Psoas muscle (tissue), 8 donors: ENCODE measurements at regions of chr12 and their contacts with region 1.

Region 1: DNA sequence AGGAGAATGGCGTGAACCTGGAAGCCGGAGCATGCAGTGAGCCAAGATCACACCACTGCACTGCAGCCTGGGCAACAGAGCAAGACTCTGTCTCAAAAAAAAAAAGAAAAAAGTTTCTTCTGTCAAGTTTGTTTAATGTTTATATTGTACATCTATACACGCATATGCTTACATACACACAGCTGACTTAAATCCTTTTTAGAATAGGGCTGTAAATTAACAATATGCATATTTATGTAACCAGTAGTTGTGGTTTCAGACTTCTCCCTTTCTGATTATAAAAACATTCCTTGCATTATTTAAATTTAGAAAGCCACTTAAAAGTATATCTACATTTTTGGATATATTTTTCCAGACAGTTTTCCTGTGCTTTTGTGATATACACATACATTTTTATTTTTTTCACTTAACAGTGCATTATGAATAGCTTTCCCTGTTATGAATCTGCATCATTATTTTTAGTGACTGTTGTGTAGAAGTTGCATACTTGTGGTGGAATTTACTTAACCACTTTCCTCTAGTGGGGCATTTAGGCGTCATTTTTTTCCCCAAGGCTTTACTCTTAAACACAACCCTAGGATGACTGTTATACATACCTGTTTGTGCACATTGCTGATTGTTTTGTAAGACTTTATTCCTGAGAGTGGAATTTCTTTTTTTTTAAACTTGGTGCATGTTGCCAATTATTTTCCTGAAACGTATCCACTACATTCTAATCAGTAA is 29.4 kb downstream of the POLR3B start:
- DNase-seq: no peak
- ATAC-seq: no peak
- H3K4me3 ChIP-seq: no peak overlapping the region
- H3K27ac ChIP-seq: no peak overlapping the region
- H3K4me1 ChIP-seq: no peaks in the 10 kb centered on the region
- H3K27me3 ChIP-seq: no peaks in the 10 kb centered on the region
- CTCF ChIP-seq: no peak

Region 2: DNA sequence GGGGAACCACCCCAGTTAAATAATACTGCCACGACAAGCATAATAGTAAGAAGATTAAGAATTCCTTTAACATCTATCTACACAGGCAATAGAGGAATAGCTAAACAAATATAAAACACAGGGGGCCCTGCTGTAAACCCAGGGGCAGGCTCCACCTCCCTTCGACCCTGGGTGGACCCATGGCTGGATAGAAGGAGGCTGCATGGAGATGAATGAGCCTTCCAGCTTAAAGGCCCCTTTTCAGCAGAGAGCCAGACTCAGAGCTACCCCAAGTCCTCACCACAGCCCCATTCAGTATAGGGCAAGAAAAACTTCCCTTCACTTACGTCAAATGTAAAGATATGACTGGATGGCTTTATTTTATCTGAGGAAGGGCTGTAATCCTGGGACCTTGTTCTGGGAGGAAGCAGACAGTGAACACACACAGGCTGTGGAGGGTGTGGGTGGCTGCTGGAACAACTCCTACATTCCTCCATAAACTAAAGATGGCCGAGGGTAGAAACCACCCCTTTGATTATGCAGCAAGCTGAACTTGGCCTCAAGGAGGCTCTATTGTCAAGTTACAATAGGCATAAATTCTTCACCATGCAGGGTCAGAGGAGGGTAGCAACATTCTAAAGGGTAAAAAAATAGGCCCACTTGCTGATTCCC is 278.7 kb before region 1 on chr12:
- intact Hi-C with region 1: no loop called
- DNase-seq: no peak
- ATAC-seq: no peak
- H3K4me3 ChIP-seq: no peak overlapping the region
- H3K27ac ChIP-seq: peak overlapping the region; percentile 12
- H3K4me1 ChIP-seq: peaks cover 82% of the 10 kb centered on the region
- H3K27me3 ChIP-seq: no peaks in the 10 kb centered on the region
- CTCF ChIP-seq: no peak

Region 3: DNA sequence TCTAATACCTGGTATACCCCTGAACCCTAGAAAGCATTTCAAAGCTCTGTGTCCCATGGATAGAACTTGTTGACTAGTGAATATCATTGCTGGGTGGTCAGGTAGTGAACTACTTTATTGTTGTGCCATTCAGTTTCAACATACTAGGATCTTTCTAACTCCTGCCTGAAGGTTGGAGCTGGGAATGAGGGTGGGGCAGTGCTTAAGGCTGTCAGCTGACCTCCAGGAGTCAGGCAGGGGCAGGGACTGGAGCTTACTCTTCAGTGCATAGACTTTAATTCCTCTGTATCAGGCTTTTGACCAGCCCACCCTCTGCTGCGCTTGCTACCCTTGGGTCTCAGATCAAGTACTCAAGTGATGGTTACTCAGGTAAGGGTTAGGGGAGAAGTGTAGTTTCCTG is 93.3 kb after region 1 on chr12:
- intact Hi-C with region 1: no loop called
- DNase-seq: no peak
- ATAC-seq: no peak
- H3K4me3 ChIP-seq: no peak overlapping the region
- H3K27ac ChIP-seq: no peak overlapping the region
- H3K4me1 ChIP-seq: no peaks in the 10 kb centered on the region
- H3K27me3 ChIP-seq: no peaks in the 10 kb centered on the region
- CTCF ChIP-seq: no peak

Region 4: GRCh38 chr12:106841510-106842302 is 454.7 kb after region 1 on chr12:
- intact Hi-C with region 1: loop called (anchors 5 kb)
- DNase-seq: no peak
- ATAC-seq: peak in 3 of 4 donors; percentile 65 to 94 (median 78)
- H3K4me3 ChIP-seq: no peak overlapping the region
- H3K27ac ChIP-seq: peak overlapping the region; percentile 3
- H3K4me1 ChIP-seq: peaks cover 32% of the 10 kb centered on the region
- H3K27me3 ChIP-seq: no peaks in the 10 kb centered on the region
- CTCF ChIP-seq: peak; percentile 53

Region 5: DNA sequence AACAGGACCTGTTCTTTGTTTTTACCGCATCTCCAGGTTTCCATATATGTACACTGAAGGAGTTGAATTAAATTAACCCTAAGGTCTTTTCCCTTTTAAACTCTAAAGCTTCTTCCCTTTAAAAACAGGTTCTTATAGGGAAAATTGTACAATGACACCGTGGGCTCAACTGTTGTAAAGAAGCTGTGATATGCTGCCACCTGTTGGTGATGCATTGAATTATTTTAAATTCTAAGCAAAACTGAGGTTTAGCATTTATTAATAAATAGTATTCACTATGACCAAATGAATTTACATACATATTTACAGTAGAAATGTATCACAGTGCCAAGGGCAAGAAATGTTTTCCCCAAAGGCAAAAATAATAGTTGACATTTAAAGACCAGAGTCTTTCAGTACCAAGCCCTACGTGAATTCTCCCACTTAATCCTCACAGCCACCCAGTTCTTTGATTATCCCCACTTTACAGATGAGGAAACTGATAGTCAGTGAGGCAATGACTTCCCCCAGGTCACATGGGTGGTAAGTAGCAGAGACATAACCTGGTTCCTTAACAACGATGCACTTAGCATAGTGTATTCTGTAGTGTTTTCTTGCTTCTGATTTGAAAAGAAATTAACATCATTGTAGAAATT is 533.1 kb after region 1 on chr12:
- intact Hi-C with region 1: loop called (anchors 2 to 5 kb)
- DNase-seq: no peak
- ATAC-seq: peak in 1 of 4 donors; percentile 68
- H3K4me3 ChIP-seq: no peak overlapping the region
- H3K27ac ChIP-seq: no peak overlapping the region
- H3K4me1 ChIP-seq: no peaks in the 10 kb centered on the region
- H3K27me3 ChIP-seq: no peaks in the 10 kb centered on the region
- CTCF ChIP-seq: peak; percentile 83

Region 6: DNA sequence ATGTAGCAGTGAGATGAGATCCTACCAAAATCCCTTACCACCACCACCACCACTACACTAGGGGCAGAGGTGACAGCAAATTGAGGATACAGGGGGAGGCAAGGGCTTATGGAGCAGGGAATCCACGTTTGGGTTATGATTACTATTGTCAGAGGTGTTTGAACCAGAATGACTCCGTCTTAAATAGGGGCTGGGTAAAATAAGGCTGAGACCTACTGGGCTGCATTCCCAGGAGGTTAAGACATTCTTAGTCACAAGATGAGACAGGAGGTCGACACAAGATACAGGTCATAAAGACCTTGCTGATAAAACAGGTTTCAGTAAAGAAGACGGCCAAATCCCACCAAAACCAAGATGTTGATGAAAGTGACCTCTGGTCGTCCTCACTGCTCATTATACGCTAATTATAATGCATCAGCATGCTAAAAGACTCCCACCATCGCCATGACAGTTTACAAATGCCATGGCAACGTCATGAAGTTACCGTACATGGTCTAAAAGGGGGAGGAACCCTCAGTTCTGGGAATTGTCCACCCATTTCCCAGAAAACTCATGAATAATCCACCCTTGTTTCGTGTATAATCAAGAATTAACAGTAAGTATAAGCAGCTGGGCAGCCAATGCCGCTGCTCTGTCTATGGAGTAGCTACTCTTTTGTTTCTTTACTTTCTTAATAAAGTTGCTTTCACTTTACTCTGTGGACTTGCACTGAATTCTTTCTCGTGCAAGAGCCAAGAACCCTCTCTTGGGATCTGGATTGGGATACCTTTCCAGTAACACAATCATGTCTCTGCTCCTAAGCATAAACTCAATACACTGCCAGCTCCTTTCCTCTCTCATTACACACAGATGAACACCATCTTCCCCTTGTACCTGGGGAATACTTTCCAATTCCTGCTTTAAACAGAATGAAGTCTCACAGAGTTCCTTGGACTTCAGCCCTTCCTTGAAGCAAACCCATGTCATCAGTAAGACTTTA is 723.1 kb after region 1 on chr12:
- intact Hi-C with region 1: loop called in 1 of 2 experiments (anchors 10 kb)
- DNase-seq: no peak
- ATAC-seq: peak in 1 of 4 donors; percentile 11
- H3K4me3 ChIP-seq: peak overlapping the region; percentile 22
- H3K27ac ChIP-seq: no peak overlapping the region
- H3K4me1 ChIP-seq: no peaks in the 10 kb centered on the region
- H3K27me3 ChIP-seq: peaks cover 0 to 2% (median 0%) of the 10 kb centered on the region in 3 donors
- CTCF ChIP-seq: no peak